Activated T-helper 1 cell treated with anti-CD3 and anti-CD28 coated beads, Interleukin-12 subunit alpha, Interleukin-12 subunit beta, Interleukin-2, Interleukin-4 antibody, amounts not matched to agents 30 ng/mL and 10 ng/mL and 1 ng/mL, durations not matched to agents 14 hours and 24 hours and 36 hours (primary cell): ENCODE measurements at regions of chr1 and their contacts with region 1.

Region 1: GRCh38 chr1:151311589-151312331 is 15.5 kb downstream of the PI4KB start:
- DNase-seq: peak; percentile 60
- H3K4me3 Mint-ChIP-seq: no peak overlapping the region
- H3K27ac Mint-ChIP-seq: peak overlapping the region; percentile 93
- H3K4me1 Mint-ChIP-seq: peaks cover 37% of the 10 kb centered on the region
- H3K27me3 Mint-ChIP-seq: no peaks in the 10 kb centered on the region

Region 2: DNA sequence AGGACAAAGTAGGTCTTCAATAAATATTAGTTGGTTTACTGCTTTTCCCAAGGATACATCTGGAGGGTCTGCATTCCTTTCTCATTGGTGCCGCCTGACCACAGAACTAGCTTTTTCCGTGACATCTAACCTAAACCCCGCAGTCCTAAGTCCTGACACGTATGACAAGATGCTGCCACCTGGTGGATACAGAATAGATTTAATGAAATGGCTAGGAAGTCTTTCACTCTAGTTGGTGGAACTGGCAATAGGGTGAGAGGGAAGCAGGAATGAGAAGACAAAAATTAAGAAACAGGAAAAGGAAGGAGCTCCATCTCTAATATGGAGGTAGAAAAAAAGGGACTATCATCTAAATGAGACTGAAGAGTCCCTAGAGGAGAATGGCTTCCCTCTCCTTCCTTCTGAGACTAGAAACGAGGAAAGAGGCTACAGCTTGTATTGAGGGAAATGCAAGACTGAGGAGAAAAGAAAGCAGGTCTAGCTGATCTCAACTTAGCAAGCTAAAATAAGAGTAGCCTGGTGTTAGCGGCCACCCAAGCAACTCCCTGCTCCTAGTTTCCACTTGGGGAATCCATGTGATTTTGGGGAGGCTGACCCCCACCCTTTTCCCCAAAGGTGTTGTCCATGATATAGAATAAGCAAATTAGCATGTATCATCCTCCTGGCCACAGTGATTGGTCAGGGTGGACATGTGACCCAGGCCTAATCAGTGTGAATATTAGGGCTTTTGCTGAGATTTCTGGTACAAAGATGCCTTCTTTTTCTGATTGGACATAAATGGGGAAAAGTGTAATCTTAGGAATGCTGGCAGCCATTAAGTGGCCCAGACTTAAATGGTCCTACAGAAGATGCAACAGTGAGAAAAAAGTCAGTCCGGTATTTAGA is 29.4 kb after region 1 on chr1:
- intact Hi-C with region 1: loop called (anchors 2 kb)
- DNase-seq: peak; percentile 37
- H3K4me3 Mint-ChIP-seq: no peak overlapping the region
- H3K27ac Mint-ChIP-seq: peak overlapping the region; percentile 46
- H3K4me1 Mint-ChIP-seq: peaks cover 33% of the 10 kb centered on the region
- H3K27me3 Mint-ChIP-seq: no peaks in the 10 kb centered on the region

Region 3: GRCh38 chr1:151346769-151347522 is 35.2 kb after region 1 on chr1 and contains the start of gene RFX5:
- intact Hi-C with region 1: loop called (anchors 1 kb)
- DNase-seq: peak; percentile 95
- H3K4me3 Mint-ChIP-seq: peak within 1 kb of the TSS; percentile 95
- H3K27ac Mint-ChIP-seq: peak within 1 kb of the TSS; percentile 99
- H3K4me1 Mint-ChIP-seq: peaks cover 45% of the 10 kb centered on the region
- H3K27me3 Mint-ChIP-seq: no peaks in the 10 kb centered on the region
- total RNA-seq, gene RFX5: 78.1 and 83.4 TPM in 2 replicates

Region 4: DNA sequence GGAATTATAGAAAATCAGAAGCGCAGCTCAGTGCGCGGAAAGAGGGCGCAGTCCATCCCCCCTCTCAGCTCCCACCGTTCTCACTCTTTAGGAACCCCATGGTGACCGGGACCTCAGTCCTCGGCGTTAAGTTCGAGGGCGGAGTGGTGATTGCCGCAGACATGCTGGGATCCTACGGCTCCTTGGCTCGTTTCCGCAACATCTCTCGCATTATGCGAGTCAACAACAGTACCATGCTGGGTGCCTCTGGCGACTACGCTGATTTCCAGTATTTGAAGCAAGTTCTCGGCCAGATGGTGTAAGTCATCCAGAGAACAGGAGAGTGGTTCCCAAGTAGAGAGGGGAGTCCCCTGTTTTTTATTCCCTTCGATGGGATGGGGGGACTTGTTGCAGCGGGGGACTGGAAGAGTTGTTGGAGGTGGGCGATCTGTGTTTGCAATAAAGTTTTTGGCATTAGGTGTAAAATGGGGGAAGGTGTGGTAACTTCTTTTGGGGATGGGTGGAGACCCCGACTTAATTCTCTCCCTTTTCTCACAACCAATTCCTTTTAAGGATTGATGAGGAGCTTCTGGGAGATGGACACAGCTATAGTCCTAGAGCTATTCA is 88.2 kb after region 1 on chr1:
- intact Hi-C with region 1: loop called (anchors 2 kb)
- DNase-seq: no peak
- H3K4me3 Mint-ChIP-seq: peak overlapping the region; percentile 92
- H3K27ac Mint-ChIP-seq: peak overlapping the region; percentile 99
- H3K4me1 Mint-ChIP-seq: peaks cover 27% of the 10 kb centered on the region
- H3K27me3 Mint-ChIP-seq: peaks cover 3% of the 10 kb centered on the region